Tibial artery (tissue), 4 donors: ENCODE measurements at regions of chr1 and their contacts with region 1.

Region 1: DNA sequence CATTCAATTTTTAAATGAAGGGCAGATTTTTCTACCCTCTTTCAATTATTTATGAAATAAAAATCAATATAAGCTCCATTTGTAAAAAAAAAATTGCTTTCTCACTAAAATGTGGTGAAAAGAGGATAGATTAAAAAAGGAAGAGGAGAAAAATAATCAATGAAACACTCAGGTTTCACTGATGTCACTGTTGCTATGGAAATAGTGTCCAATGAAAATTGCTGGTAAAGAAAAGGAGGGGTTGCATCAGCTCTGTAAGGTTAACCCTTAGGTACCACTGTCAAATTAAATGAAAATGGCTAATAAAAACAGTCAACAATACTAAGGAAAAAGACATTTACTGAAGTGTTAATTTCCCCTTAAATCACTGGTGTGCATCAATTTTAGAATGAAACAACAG is 91.6 kb upstream of the TTC39A start:
- DNase-seq: no peak
- H3K4me3 ChIP-seq: no peak overlapping the region
- H3K27ac ChIP-seq: peak overlapping the region in 1 of 2 donors; percentile 16
- H3K4me1 ChIP-seq: peaks cover 0 to 42% (median 11%) of the 10 kb centered on the region in 4 donors
- H3K27me3 ChIP-seq: no peaks in the 10 kb centered on the region
- CTCF ChIP-seq: no peak

Region 2: DNA sequence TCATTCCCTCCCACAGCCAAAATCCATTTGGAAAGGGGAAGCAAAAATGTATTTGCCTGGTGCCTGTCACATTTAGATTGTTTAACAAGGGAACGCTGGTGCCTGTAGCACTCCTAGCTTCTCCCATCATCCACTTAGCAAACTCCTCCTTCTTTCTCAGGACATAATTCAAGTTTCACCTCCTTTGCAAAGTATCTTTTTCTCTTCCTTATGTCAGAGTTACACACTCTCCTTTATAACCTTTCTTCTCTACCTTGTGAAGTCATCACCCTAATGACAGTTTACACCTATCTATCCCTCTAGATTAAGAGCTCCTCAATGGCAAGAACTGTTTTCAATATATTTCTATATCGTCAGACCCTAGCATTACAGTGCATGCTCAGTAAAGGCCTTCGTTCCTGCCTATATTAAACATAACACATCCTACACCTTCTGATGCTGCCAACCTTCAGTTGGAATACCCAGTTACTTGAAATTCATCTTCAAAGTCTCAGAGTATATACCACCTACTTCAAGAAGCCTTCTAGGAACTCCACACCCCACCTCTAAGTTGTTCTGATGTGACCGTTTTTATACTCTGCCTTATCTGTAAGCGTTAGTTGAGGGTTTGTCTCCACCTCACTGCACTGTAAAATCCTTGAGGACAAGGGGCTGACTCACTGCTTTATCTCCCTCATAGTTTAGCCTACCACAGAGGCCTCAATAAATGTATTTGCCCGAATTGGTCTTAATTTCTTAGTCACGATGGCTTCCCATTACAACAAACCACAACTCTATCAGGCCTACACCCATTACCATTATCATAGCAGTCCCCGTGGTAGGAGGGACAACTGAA is 98.1 kb after region 1 on chr1:
- intact Hi-C with region 1: loop called (anchors 10 kb)
- DNase-seq: no peak
- H3K4me3 ChIP-seq: no peak overlapping the region
- H3K27ac ChIP-seq: peak overlapping the region in 1 of 2 donors; percentile 1
- H3K4me1 ChIP-seq: peaks cover 0 to 22% (median 7%) of the 10 kb centered on the region in 4 donors
- H3K27me3 ChIP-seq: no peaks in the 10 kb centered on the region
- CTCF ChIP-seq: no peak